Dorsolateral prefrontal cortex (tissue), 120 donors: ENCODE measurements at regions of chr6 and their contacts with region 1.

Region 1: DNA sequence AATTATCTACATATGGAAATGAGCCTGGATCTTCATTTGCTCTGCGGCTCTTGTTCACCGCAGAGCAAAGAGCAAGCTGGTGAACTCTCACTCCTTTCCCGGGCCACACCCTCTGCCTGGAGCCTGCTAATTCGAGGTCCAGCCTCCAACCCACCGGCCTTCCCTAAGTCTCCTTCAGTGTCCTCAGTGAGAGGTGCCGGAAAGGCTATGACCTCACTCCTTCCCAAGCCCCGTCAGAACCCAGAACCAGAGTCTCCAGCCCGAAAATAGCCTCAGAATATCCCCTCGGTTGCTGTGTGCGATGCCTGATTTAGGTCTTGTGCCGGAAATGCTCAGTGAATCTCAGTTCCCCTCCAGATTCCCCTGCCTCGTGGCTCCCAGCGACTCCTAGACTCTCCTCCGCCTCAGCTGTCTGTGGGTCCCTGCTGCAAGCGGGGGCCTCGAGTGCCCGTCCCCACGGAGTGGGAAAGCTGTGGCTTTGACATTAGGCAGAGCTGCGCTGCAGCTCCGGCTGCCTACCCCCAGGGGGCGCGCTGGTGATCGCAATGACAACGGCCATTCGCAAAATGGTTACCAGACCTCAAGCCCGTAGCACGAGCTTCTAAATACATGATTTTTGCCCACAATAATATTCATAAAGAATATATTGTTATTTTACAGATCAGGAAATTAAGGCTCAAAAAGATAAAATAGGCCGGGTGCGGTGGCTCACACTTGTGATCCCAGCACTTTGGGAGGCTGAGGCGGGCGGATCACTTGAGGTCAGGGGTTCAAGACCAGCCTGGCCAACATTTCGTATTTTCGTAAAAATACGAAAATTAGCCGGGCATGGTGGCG is 4.1 kb upstream of the BNIP5 start:
- DNase-seq: peak; percentile 46 to 84 (median 76)
- H3K4me3 ChIP-seq: peak overlapping the region in 37 of 59 donors; percentile 0 to 48 (median 22)
- H3K27ac ChIP-seq: peak overlapping the region in 50 of 59 donors; percentile 14 to 84 (median 52)
- H3K27me3 ChIP-seq: no peaks in the 10 kb centered on the region
- CTCF ChIP-seq: peak; percentile 79 to 99 (median 95)

Region 2: GRCh38 chr6:36204068-36204753 is 136.6 kb before region 1 on chr6:
- intact Hi-C with region 1: loop called in 1 of 2 experiments (anchors 10 kb)
- DNase-seq: no peak
- H3K4me3 ChIP-seq: no peak overlapping the region
- H3K27ac ChIP-seq: no peak overlapping the region
- H3K27me3 ChIP-seq: no peaks in the 10 kb centered on the region
- CTCF ChIP-seq: no peak

Region 3: GRCh38 chr6:36302227-36302976 is 38.4 kb before region 1 on chr6:
- intact Hi-C with region 1: loop called in 1 of 2 experiments (anchors 5 kb)
- DNase-seq: peak; percentile 51 to 95 (median 76)
- H3K4me3 ChIP-seq: peak overlapping the region in 1 of 59 donors; percentile 8
- H3K27ac ChIP-seq: no peak overlapping the region
- H3K27me3 ChIP-seq: no peaks in the 10 kb centered on the region
- CTCF ChIP-seq: peak; percentile 78 to 98 (median 94)

Region 4: DNA sequence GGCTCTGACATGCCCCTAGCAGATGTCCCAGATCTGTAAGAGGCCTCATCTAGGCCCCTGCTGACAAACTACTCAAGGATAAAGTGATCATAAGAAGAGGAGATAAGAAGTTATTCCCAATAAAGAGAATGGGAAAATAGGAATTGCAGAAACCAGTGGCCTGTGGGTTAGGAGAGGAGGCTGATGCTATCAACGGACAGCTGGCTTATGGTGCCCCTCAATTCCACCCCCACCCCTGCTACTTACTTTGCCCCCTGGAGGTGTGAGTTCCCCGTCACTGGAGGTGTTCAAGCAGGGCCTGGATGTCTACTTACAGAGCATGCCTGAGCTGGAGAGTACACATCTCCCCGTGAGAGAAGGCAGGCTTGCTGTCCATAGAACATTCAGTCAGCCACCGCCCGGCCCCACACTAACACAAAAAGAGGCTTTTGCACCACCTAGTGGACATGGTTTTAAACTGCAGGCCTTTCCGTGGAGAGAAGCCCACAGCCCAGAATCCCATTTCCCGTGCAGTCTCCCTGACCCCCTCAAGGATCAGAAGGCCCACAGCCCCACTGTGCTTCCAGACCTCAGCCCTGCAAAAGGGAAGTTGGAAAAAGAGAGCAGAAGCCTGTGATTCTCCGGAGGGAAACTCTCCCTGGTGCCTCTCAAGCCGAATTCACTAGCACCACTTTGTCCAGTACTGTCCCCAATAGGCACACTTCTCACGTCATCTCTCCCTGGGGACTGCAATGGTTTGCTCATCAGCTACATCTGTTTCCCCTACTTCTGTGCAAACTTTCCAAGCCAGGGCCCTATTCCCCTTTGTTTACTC is 19.6 kb after region 1 on chr6:
- intact Hi-C with region 1: loop called in 1 of 2 experiments (anchors 2 kb)
- DNase-seq: peak; percentile 67 to 91 (median 83)
- H3K4me3 ChIP-seq: peak overlapping the region in 10 of 59 donors; percentile 0 to 33 (median 12)
- H3K27ac ChIP-seq: peak overlapping the region; percentile 8 to 98 (median 78)
- H3K27me3 ChIP-seq: no peaks in the 10 kb centered on the region
- CTCF ChIP-seq: peak; percentile 61 to 97 (median 89)

Region 5: GRCh38 chr6:36478051-36478526 is 137.3 kb after region 1 on chr6:
- intact Hi-C with region 1: no loop called
- DNase-seq: no peak
- H3K4me3 ChIP-seq: no peak overlapping the region
- H3K27ac ChIP-seq: peak overlapping the region in 1 of 59 donors; percentile 6
- H3K27me3 ChIP-seq: no peaks in the 10 kb centered on the region
- CTCF ChIP-seq: no peak

Region 6: GRCh38 chr6:36546920-36547645 is 206.2 kb after region 1 on chr6 and contains the start of gene STK38:
- intact Hi-C with region 1: loop called in 1 of 2 experiments (anchors 10 kb)
- DNase-seq: peak; percentile 72 to 91 (median 84)
- H3K4me3 ChIP-seq: peak within 1 kb of the TSS; percentile 58 to 100 (median 96)
- H3K27ac ChIP-seq: peak within 1 kb of the TSS; percentile 88 to 100 (median 97)
- H3K27me3 ChIP-seq: no peaks in the 10 kb centered on the region
- CTCF ChIP-seq: peak in 39 of 56 donors; percentile 3 to 63 (median 37)
- total RNA-seq, gene STK38: 6.3 to 23.4 (median 13.6) TPM

Region 7: GRCh38 chr6:36559011-36559793 is 218.4 kb after region 1 on chr6:
- intact Hi-C with region 1: no loop called
- DNase-seq: no peak
- H3K4me3 ChIP-seq: no peak overlapping the region
- H3K27ac ChIP-seq: no peak overlapping the region
- H3K27me3 ChIP-seq: no peaks in the 10 kb centered on the region
- CTCF ChIP-seq: no peak